ENCODE measurements at regions of chr7 and their contacts with region 1.

Region 1: GRCh38 chr7:149741629-149742028 is 31.8 kb downstream of the ZNF467 start:
- DNase-seq: no peak
- H3K4me3 ChIP-seq: peak overlapping the region; percentile 23 to 47 (median 37)
- H3K27ac ChIP-seq: no peak overlapping the region
- H3K4me1 ChIP-seq: peaks cover 9 to 23% (median 16%) of the 10 kb centered on the region in 4 donors
- H3K27me3 ChIP-seq: peaks cover 0 to 10% (median 0%) of the 10 kb centered on the region in 4 donors
- CTCF ChIP-seq: no peak
- EP300 ChIP-seq: no peak
- POLR2A ChIP-seq: no peak

Region 2: DNA sequence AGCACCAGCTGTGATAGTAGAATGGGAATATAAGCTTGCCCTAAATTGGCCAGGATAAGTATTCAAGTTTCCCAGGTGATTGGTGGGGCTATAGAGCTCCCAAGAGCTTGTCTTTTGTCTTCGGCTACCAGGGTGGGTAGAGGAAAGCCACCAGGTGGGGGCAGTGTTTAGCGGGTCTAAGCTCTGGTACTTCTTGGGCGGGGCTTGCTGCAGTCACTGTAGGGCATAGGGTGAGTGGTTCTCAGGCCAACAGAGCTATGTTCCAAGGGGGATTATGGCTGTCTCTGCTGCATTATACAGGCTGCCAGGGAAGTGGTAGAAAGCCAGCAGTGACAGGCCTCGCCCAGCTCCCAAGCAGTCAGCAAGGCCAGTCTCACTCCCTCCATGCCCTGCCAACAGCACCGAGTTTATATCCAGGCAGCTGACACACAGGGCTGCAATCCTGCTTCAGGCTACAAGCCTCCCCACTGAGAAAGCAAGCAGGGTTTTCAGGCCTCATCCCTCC is 79.0 kb before region 1 on chr7:
- intact Hi-C with region 1: loop called (anchors 2 kb)
- DNase-seq: no peak
- H3K4me3 ChIP-seq: no peak overlapping the region
- H3K27ac ChIP-seq: peak overlapping the region in 1 of 4 donors; percentile 42
- H3K4me1 ChIP-seq: no peaks in the 10 kb centered on the region
- H3K27me3 ChIP-seq: no peaks in the 10 kb centered on the region
- CTCF ChIP-seq: peak; percentile 47 to 51 (median 49)
- EP300 ChIP-seq: no peak
- POLR2A ChIP-seq: no peak

Region 3: GRCh38 chr7:150003304-150003810 is 261.7 kb after region 1 on chr7:
- intact Hi-C with region 1: no loop called
- DNase-seq: no peak
- H3K4me3 ChIP-seq: no peak overlapping the region
- H3K27ac ChIP-seq: no peak overlapping the region
- H3K4me1 ChIP-seq: no peaks in the 10 kb centered on the region
- H3K27me3 ChIP-seq: no peaks in the 10 kb centered on the region
- CTCF ChIP-seq: no peak
- EP300 ChIP-seq: no peak
- POLR2A ChIP-seq: no peak